A673 (cell line): ENCODE measurements at regions of chr2 and their contacts with region 1.

Region 1: DNA sequence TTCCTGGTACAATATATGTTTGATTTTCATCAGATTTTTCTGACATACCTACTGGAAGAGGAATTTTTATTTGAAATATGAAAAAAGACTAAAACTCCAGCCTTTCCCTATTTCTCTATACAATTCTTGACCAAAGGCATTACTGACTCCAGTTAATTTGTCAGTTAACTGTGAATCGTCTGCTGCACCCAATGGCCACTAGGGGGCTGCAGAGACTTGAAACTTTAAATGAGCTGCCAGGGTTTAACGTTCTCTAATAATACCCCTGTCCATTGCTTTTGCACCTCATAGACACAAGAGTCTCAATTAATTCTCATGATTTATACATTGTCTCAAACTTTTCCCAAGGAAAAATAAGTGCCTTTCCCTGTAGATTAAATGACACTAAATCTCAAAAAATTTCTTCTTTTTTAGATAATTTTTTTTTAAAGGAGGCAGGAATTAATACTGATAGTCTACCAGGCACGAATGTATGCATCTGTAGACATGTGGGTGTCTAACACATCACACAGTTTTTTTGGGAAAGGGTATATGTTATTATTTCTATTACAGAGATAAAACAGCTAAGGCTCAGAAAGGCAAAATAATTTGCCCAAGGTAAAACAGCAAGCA is 1.8 kb upstream of the ALK start:
- DNase-seq: peak; percentile 86
- H3K4me3 ChIP-seq: no peak overlapping the region
- H3K27ac ChIP-seq: no peak overlapping the region
- H3K4me1 ChIP-seq: peaks cover 10% of the 10 kb centered on the region
- H3K27me3 ChIP-seq: no peaks in the 10 kb centered on the region
- CTCF ChIP-seq: peak; percentile 98

Region 2: GRCh38 chr2:29295857-29296256 is 627.4 kb before region 1 on chr2:
- CTCF ChIA-PET with region 1: interaction called, 3 read pairs
- POLR2A ChIA-PET with region 1: no interaction called
- intact Hi-C with region 1: loop called (anchors 5 kb)
- DNase-seq: peak; percentile 61
- H3K4me3 ChIP-seq: no peak overlapping the region
- H3K27ac ChIP-seq: no peak overlapping the region
- H3K4me1 ChIP-seq: no peaks in the 10 kb centered on the region
- H3K27me3 ChIP-seq: no peaks in the 10 kb centered on the region
- CTCF ChIP-seq: peak; percentile 67

Region 3: GRCh38 chr2:29865512-29865911 is 57.7 kb before region 1 on chr2:
- CTCF ChIA-PET with region 1: no interaction called
- POLR2A ChIA-PET with region 1: no interaction called
- intact Hi-C with region 1: no loop called
- DNase-seq: no peak
- H3K4me3 ChIP-seq: no peak overlapping the region
- H3K27ac ChIP-seq: no peak overlapping the region
- H3K4me1 ChIP-seq: no peaks in the 10 kb centered on the region
- H3K27me3 ChIP-seq: no peaks in the 10 kb centered on the region
- CTCF ChIP-seq: no peak

Region 4: DNA sequence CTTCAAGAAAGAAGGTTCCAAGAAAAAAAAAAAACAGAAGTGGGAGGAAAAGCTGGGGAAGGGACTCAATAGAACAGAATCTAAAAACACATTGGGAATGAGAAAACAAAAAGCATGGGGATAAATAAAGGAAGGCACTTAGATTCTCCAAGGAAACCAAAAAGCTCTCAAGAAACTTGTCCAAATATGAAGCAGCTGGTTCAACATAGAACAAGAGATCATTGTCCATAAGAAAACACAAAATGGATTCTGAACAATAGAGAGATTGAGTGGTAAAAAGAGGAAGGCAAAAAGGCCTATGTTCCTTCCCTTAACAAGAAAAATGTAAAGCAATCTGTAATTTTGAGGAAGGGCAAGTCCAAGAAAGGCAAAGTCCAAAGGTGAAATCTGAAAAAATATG is 31.1 kb after region 1 on chr2:
- CTCF ChIA-PET with region 1: no interaction called
- POLR2A ChIA-PET with region 1: no interaction called
- intact Hi-C with region 1: no loop called
- DNase-seq: no peak
- H3K4me3 ChIP-seq: no peak overlapping the region
- H3K27ac ChIP-seq: no peak overlapping the region
- H3K4me1 ChIP-seq: no peaks in the 10 kb centered on the region
- H3K27me3 ChIP-seq: no peaks in the 10 kb centered on the region
- CTCF ChIP-seq: no peak

Region 5: GRCh38 chr2:30115141-30115980 is 192.1 kb after region 1 on chr2:
- CTCF ChIA-PET with region 1: interaction called, 5 read pairs
- POLR2A ChIA-PET with region 1: no interaction called
- intact Hi-C with region 1: loop called (anchors 2 kb)
- DNase-seq: peak; percentile 93
- H3K4me3 ChIP-seq: peak overlapping the region; percentile 3
- H3K27ac ChIP-seq: peak overlapping the region; percentile 72
- H3K4me1 ChIP-seq: peaks cover 30% of the 10 kb centered on the region
- H3K27me3 ChIP-seq: no peaks in the 10 kb centered on the region
- CTCF ChIP-seq: peak; percentile 97